CD8-positive, alpha-beta T cell (primary cell): ENCODE measurements at regions of chr4 and their contacts with region 1.

Region 1: DNA sequence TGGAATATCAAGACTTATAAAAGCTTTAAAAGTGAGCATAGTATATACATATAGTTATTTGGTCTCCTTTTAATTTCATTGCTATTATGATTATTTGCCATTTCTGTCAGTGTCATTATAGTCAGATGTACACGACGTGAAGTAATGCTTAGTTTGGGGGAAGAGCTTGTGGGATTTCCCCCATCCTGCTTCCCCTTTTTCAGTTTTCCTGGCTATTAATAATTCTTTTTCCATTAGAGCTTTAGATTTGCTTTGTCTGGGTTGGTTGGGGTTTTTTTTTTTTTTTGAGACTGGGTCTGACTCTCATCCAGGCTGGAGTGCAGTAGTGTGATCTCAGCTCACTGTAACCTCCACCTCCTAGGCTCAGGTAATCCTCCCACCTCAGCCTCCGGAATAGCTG is 5.4 kb downstream of the ABCE1 start:
- DNase-seq: no peak
- ATAC-seq: no peak
- H3K4me3 ChIP-seq: no peak overlapping the region
- H3K4me3 Mint-ChIP-seq: no peak overlapping the region
- H3K27ac ChIP-seq: no peak overlapping the region
- H3K27ac Mint-ChIP-seq: no peak overlapping the region
- H3K4me1 ChIP-seq: peaks cover 33% of the 10 kb centered on the region
- H3K4me1 Mint-ChIP-seq: peaks cover 31% of the 10 kb centered on the region
- H3K27me3 ChIP-seq: no peaks in the 10 kb centered on the region
- H3K27me3 Mint-ChIP-seq: no peaks in the 10 kb centered on the region
- CTCF ChIP-seq: no peak

Region 2: DNA sequence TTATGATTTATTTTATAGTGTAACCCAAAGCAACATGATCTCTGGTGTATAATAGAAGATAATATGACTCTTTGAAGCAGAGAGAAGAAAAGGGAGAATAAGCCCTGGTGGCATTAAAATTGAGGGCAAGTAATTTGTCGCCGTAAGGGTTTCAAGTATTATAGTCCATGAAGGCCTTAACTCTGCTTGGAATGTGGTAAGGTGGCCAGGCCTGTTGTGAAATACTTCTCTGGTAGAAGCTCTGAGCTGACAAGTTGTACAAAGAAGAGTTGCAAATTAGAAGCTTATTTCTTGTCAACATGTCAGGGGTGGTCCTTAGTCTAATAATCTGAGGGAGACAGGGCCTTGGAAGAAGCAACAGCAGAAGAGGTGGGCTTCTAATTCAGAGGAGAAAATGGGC is 609.2 kb before region 1 on chr4:
- CTCF ChIA-PET with region 1: no interaction called
- POLR2A ChIA-PET with region 1: no interaction called
- intact Hi-C with region 1: no loop called
- DNase-seq: no peak
- ATAC-seq: no peak
- H3K4me3 ChIP-seq: no peak overlapping the region
- H3K4me3 Mint-ChIP-seq: no peak overlapping the region
- H3K27ac ChIP-seq: no peak overlapping the region
- H3K27ac Mint-ChIP-seq: no peak overlapping the region
- H3K4me1 ChIP-seq: no peaks in the 10 kb centered on the region
- H3K4me1 Mint-ChIP-seq: no peaks in the 10 kb centered on the region
- H3K27me3 ChIP-seq: no peaks in the 10 kb centered on the region
- H3K27me3 Mint-ChIP-seq: no peaks in the 10 kb centered on the region
- CTCF ChIP-seq: no peak

Region 3: GRCh38 chr4:145132511-145133098 is 29.1 kb after region 1 on chr4:
- CTCF ChIA-PET with region 1: no interaction called
- POLR2A ChIA-PET with region 1: no interaction called
- intact Hi-C with region 1: loop called in 1 of 2 experiments (anchors 2 kb)
- DNase-seq: no peak
- ATAC-seq: no peak
- H3K4me3 ChIP-seq: no peak overlapping the region
- H3K4me3 Mint-ChIP-seq: no peak overlapping the region
- H3K27ac ChIP-seq: peak overlapping the region in 1 of 2 experiments; percentile 6
- H3K27ac Mint-ChIP-seq: peak overlapping the region; percentile 83
- H3K4me1 ChIP-seq: no peaks in the 10 kb centered on the region
- H3K4me1 Mint-ChIP-seq: peaks cover 39% of the 10 kb centered on the region
- H3K27me3 ChIP-seq: no peaks in the 10 kb centered on the region
- H3K27me3 Mint-ChIP-seq: no peaks in the 10 kb centered on the region
- CTCF ChIP-seq: no peak

Region 4: GRCh38 chr4:145148980-145149379 is 45.5 kb after region 1 on chr4:
- CTCF ChIA-PET with region 1: interaction called, 3 read pairs
- POLR2A ChIA-PET with region 1: no interaction called
- intact Hi-C with region 1: loop called (anchors 5 kb)
- DNase-seq: no peak
- ATAC-seq: no peak
- H3K4me3 ChIP-seq: no peak overlapping the region
- H3K4me3 Mint-ChIP-seq: no peak overlapping the region
- H3K27ac ChIP-seq: no peak overlapping the region
- H3K27ac Mint-ChIP-seq: no peak overlapping the region
- H3K4me1 ChIP-seq: no peaks in the 10 kb centered on the region
- H3K4me1 Mint-ChIP-seq: peaks cover 4% of the 10 kb centered on the region
- H3K27me3 ChIP-seq: no peaks in the 10 kb centered on the region
- H3K27me3 Mint-ChIP-seq: no peaks in the 10 kb centered on the region
- CTCF ChIP-seq: no peak

Region 5: GRCh38 chr4:145481164-145481941 is 377.9 kb after region 1 on chr4 and contains the start of gene SMAD1:
- CTCF ChIA-PET with region 1: no interaction called
- POLR2A ChIA-PET with region 1: no interaction called
- intact Hi-C with region 1: no loop called
- DNase-seq: peak in 2 of 9 experiments; percentile 4 to 25
- ATAC-seq: no peak
- H3K4me3 ChIP-seq: peak within 1 kb of the TSS; percentile 38 to 41
- H3K4me3 Mint-ChIP-seq: peak within 1 kb of the TSS; percentile 76
- H3K27ac ChIP-seq: no peak within 1 kb of the TSS
- H3K27ac Mint-ChIP-seq: no peak within 1 kb of the TSS
- H3K4me1 ChIP-seq: no peaks in the 10 kb centered on the region
- H3K4me1 Mint-ChIP-seq: peaks cover 6% of the 10 kb centered on the region
- H3K27me3 ChIP-seq: peaks cover 0 to 14% of the 10 kb centered on the region in 2 experiments
- H3K27me3 Mint-ChIP-seq: peaks cover 30% of the 10 kb centered on the region
- CTCF ChIP-seq: no peak
- total RNA-seq, gene SMAD1: not detected